IMR-90 (cell line): ENCODE measurements at regions of chr2 and their contacts with region 1.

Region 1: DNA sequence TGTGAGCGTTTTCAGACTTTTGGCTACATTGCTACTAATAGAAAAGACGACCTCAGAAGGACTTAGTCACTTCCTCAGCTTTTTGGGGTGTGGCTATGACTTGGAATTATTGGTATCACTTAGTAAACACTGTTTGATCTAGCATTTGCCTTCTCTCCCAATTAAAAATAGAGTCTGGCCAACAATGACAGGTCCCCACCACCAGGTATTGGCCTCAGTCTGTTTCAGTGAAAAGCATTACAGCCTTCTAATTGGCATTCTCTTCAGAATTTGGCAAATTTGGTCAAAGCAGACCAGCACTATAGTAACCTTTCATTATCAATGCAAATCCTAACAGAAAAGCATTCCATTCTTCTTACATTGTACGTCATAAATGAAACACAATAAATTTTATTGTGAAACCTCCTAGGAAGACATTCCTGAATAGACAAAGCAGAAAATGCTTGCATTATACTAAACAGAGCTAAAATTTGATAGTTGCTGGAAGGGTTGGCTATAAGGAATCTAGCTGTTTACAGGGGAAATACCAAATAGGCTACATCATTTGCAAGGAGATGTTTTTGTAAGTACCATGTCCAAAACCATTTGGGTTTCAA is 613.9 kb downstream of the IRS1 start:
- DNase-seq: peak; percentile 98
- ATAC-seq: peak; percentile 73
- H3K4me3 ChIP-seq: peak overlapping the region; percentile 24; the same call in 1 of the 2 replicates
- H3K27ac ChIP-seq: peak overlapping the region; percentile 100
- H3K4me1 ChIP-seq: peaks cover 28% of the 10 kb centered on the region
- H3K27me3 ChIP-seq: no peaks in the 10 kb centered on the region
- CTCF ChIP-seq: no peak
- POLR2A ChIP-seq: no peak
- RAD21 ChIP-seq: no peak; the same call in 1 of the 2 replicates

Region 2: GRCh38 chr2:226030788-226031646 is 154.7 kb before region 1 on chr2:
- CTCF ChIA-PET with region 1: no interaction called
- POLR2A ChIA-PET with region 1: no interaction called
- dilution Hi-C with region 1: no loop called
- in situ Hi-C with region 1: no loop called
- intact Hi-C with region 1: loop called (anchors 2 kb)
- DNase-seq: peak; percentile 69
- ATAC-seq: peak; percentile 92
- H3K4me3 ChIP-seq: peak overlapping the region; percentile 52
- H3K27ac ChIP-seq: peak overlapping the region; percentile 89
- H3K4me1 ChIP-seq: peaks cover 6% of the 10 kb centered on the region
- H3K27me3 ChIP-seq: no peaks in the 10 kb centered on the region
- CTCF ChIP-seq: no peak
- POLR2A ChIP-seq: no peak
- RAD21 ChIP-seq: peak; percentile 33

Region 3: DNA sequence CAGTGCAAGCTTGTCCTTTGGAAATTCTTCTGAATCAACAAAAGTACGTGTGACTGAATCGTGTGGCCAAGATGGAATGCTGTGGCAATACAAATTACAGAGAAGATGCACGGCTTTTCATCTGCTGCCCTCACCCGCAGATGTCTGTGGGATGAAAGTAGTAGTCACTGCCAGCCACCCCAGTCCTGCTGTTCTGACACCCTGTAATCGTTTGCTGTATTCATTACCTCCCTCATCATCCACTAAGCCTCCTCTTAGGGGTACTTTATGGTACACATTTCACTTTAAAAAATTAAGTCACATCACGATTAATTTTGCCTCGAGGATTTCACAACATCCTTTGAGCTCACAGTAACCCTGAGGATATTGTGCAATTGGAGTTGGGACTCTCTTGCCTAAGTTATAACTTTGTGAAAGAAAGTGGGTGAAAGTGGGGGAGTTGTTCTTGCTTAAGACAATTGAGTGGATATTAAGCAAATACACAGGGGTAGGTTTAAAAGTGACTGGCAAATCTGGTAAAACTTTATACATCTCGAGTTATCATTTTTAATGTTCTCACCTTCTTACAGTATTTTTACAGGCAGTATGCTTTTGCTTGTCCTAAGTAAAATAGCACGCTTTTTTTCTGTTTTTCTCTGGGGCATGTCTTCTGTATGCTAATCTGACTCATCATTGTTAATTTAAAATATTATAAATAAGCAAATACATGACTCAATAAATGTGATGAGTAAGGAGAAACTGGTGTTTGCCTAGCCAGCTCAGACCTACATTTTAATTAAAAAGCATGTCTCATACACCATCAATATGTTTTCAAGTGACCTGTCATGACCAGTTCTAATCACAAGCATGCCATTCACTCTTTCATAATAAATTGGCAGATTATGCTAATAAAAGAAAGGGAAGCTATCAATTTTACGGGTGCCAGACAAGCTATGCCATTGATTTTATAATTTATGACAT is 67.0 kb before region 1 on chr2:
- CTCF ChIA-PET with region 1: no interaction called
- POLR2A ChIA-PET with region 1: interaction called, 3 read pairs
- dilution Hi-C with region 1: no loop called
- in situ Hi-C with region 1: no loop called
- intact Hi-C with region 1: loop called (anchors 1 kb)
- DNase-seq: peak; percentile 91
- ATAC-seq: peak; percentile 42
- H3K4me3 ChIP-seq: peak overlapping the region; percentile 6; the same call in 1 of the 2 replicates
- H3K27ac ChIP-seq: peak overlapping the region; percentile 92
- H3K4me1 ChIP-seq: peaks cover 8% of the 10 kb centered on the region
- H3K27me3 ChIP-seq: no peaks in the 10 kb centered on the region
- CTCF ChIP-seq: no peak
- POLR2A ChIP-seq: no peak
- RAD21 ChIP-seq: no peak; the same call in 1 of the 2 replicates

Region 4: DNA sequence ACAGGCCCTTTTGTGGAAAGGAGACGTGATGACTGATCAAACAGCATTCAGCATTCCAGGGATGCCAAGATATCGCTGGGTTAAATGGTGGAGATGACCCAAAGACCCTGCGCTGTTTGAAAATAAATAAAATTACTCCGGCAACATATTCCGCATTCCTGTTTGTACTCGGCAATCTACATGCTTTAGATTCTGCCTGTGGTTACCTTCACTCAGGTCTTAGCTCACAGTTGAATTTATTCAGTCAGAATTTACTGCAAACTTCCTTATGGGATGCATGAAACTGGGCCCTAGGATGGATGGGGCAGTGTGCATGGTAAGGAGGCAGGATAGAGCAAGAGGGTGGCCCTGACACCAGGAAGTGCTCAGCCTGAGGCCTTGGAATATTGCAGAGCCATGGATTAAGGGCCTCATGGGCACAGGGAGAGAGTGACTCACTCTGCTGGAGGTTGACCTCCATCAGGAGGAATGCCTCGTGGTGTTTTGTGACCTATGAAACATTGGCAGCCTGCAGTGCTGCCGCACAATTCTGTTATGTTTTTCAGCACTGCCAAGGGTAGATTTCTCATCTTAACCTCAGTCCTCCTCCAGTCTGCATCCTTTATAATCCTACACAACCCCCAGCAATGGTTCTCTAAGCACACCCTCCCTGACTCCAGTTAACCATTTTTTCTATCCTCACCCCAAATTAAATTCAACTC is 292.5 kb after region 1 on chr2:
- CTCF ChIA-PET with region 1: no interaction called
- POLR2A ChIA-PET with region 1: no interaction called
- dilution Hi-C with region 1: no loop called
- in situ Hi-C with region 1: no loop called
- intact Hi-C with region 1: loop called (anchors 1 kb)
- DNase-seq: peak; percentile 96
- ATAC-seq: peak; percentile 87
- H3K4me3 ChIP-seq: no peak overlapping the region
- H3K27ac ChIP-seq: peak overlapping the region; percentile 96
- H3K4me1 ChIP-seq: peaks cover 29% of the 10 kb centered on the region
- H3K27me3 ChIP-seq: no peaks in the 10 kb centered on the region
- CTCF ChIP-seq: no peak
- POLR2A ChIP-seq: no peak
- RAD21 ChIP-seq: peak; percentile 7

Region 5: GRCh38 chr2:226721541-226721940 is 535.8 kb after region 1 on chr2:
- CTCF ChIA-PET with region 1: no interaction called
- POLR2A ChIA-PET with region 1: no interaction called
- dilution Hi-C with region 1: no loop called
- in situ Hi-C with region 1: no loop called
- intact Hi-C with region 1: loop called (anchors 5 kb)
- DNase-seq: peak; percentile 36
- ATAC-seq: 0 out of 2 replicates have a peak, but pooled peaks have one; percentile 19
- H3K4me3 ChIP-seq: no peak overlapping the region
- H3K27ac ChIP-seq: no peak overlapping the region
- H3K4me1 ChIP-seq: peaks cover 12% of the 10 kb centered on the region
- H3K27me3 ChIP-seq: no peaks in the 10 kb centered on the region
- CTCF ChIP-seq: no peak
- POLR2A ChIP-seq: no peak
- RAD21 ChIP-seq: no peak

Region 6: GRCh38 chr2:226984750-226985582 is 799.3 kb after region 1 on chr2:
- CTCF ChIA-PET with region 1: no interaction called
- POLR2A ChIA-PET with region 1: interaction called, 3 read pairs
- dilution Hi-C with region 1: no loop called
- in situ Hi-C with region 1: loop called (anchors 25 kb)
- intact Hi-C with region 1: loop called (anchors 10 kb)
- DNase-seq: peak; percentile 83
- ATAC-seq: peak; percentile 92
- H3K4me3 ChIP-seq: no peak overlapping the region
- H3K27ac ChIP-seq: no peak overlapping the region
- H3K4me1 ChIP-seq: 0 out of 2 replicates have a peak, but pooled peaks cover 4% of the 10 kb centered on the region
- H3K27me3 ChIP-seq: no peaks in the 10 kb centered on the region
- CTCF ChIP-seq: peak; percentile 86
- POLR2A ChIP-seq: 0 out of 2 replicates have a peak, but pooled peaks have one; percentile 24
- RAD21 ChIP-seq: peak; percentile 92